Activated CD8-positive, alpha-beta T cell treated with anti-CD3 and anti-CD28 coated beads for 36 hours (primary cell): ENCODE measurements at regions of chr14 and their contacts with region 1.

Region 1: DNA sequence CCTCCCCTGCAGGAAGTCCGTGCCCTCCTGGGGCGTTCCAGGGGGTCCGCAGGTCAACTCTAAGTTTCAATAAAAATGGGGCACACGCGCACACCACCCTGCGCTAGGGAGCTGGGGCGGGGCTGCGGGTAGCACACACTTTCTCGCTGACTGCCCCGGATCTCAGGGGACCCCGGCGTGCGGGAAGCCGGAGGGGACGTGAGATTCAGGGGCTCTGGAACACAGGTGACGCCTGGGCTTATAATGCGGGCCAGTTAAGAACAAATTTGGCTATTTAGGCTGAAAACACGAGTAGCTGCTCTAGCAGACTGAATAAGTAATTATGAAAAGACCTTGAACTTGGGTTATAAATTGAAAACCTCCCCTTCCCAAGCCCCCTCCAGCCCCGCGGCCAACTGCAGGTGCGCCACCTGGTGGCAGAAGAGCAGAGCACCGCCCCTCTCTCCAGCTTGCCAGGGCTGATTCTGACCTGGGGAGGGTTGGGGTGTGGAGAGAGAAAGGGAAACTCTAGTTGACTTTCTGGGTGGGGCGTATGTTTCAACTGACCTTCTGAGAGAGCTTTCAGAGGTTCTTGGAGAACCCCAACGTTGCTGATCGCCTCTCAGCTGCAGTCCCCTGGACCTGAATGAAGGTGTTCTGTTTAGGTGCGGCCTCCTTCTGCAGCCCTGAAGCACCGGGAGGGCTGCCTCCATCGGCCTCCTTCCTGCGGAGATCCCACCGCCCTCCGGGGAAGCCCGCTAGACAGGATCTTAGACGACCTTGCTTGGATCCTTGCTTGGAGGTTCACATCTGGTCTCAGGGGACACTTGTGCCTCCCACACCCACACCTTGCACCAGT is 118.4 kb upstream of the EVL start:
- DNase-seq: peak; percentile 56
- ATAC-seq: peak; percentile 83
- H3K4me3 Mint-ChIP-seq: peak overlapping the region; percentile 43
- H3K27ac Mint-ChIP-seq: no peak overlapping the region
- H3K4me1 Mint-ChIP-seq: peaks cover 10% of the 10 kb centered on the region
- H3K27me3 Mint-ChIP-seq: peaks cover 16% of the 10 kb centered on the region
- CTCF ChIP-seq: peak; percentile 95

Region 2: DNA sequence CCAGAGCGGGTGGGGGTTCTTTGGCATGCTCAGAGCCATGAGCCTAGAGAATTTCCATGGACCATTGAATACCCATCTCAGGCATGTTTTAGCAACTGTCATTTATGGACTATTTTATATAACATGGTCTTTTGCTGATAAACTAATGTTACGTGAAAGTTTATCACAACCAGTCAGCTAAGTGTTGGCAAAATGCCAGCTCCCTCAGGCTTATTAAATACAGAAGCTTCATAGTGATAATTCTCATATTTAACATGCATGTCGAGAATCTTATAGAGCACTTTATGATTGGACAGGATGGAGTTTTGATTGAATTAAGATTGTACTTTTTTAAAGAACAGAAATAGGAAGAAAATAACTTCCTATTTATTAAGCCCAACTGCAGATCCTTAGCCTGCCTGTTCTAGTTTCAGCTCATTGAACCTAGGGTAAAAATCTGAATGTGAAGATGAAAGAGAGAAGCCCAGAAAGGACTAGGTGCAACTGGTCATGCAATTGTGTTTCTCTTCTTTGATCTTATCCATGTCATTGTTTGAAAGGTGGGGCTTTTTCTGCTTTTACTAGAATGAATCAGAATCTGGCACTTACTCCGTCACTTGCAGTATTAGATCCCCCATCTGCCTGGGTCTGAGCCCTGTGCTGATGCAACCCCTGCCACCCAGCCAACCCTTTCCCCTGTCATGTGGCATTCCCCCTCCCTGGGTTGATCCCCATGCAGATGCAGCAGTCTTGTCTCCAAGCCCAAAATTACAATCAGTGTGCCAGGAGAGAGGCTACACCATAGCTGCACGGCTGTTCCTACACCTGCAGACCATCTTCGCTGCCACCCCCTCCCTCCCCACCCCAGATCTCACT is 16.2 kb before region 1 on chr14:
- CTCF ChIA-PET with region 1: interaction called, 37 read pairs
- POLR2A ChIA-PET with region 1: no interaction called
- intact Hi-C with region 1: no loop called
- DNase-seq: peak; percentile 63
- ATAC-seq: peak; percentile 94
- H3K4me3 Mint-ChIP-seq: no peak overlapping the region
- H3K27ac Mint-ChIP-seq: no peak overlapping the region
- H3K4me1 Mint-ChIP-seq: no peaks in the 10 kb centered on the region
- H3K27me3 Mint-ChIP-seq: peaks cover 5% of the 10 kb centered on the region
- CTCF ChIP-seq: no peak

Region 3: DNA sequence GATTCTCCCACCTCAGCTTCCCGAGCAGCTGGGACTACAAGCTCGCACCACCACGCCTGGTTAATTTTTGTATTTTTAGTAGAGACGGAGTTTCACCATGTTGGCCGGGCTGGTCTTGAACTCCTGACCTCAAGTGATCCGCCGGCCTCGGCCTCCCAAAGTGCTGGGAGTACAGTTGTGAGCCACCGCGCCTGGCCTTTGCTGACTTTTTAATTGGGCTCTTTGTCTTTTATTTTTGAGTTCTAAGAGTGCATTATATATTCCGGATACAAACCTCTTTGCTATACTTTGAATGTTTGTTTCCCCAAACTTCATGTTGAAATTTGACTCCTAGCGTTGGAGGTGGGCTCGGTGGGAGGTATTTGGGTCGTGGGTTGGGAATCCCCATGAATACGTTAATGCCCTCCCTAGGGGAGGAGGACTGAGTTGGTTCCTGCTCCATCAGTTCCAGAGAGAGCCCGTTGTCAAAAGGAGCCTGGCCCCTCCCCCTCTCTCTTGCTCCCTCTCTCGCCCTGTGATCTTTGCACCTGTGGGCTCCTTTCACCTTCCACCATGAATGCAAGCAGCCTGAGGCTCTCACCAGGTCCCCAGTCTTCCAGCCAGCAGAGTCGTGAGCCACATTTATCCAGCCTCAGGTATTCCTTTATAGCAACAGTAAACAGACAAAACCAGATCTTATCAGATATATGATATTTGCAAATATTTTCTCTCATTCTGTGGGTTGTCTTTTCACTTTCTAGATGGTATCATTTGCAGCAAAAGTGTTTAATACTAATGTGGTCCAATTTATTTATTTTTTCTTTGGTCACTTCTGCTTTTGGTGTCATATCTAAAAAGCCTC is 15.2 kb after region 1 on chr14:
- CTCF ChIA-PET with region 1: interaction called, 11 read pairs
- POLR2A ChIA-PET with region 1: no interaction called
- intact Hi-C with region 1: no loop called
- DNase-seq: no peak
- ATAC-seq: no peak
- H3K4me3 Mint-ChIP-seq: no peak overlapping the region
- H3K27ac Mint-ChIP-seq: no peak overlapping the region
- H3K4me1 Mint-ChIP-seq: no peaks in the 10 kb centered on the region
- H3K27me3 Mint-ChIP-seq: peaks cover 11% of the 10 kb centered on the region
- CTCF ChIP-seq: no peak